ENCODE measurements at regions of chrX and their contacts with region 1.

Region 1: DNA sequence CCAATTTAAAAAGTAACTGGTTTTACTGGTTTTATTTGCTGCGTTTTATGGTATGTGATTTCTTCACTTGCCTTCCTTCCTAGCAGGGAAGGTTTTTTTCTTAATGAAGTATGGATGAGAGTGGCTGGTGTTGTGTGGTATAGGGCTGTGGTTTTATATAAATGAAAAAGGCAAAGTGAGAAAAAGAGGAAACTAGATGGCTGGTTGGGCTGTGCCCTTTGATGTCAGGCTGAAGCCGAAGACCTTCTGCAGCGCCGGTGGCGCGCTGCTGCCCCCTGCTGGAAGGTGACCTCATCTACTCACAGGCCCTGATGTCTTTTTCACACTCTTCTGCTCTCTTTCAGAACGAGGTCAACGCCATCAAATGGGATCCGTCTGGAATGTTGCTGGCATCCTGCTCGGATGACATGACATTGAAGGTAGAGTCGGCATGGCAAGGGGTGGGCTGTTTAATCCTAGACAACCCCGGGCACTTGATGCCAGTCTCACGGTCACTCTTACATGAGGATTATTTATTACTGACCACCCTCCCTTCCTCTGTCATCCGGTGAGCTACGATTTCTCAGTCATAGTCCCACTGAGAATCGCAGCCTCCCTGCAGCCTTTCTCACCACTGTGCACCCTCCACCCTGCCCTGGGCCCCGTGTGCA is 56.6 kb downstream of the GPR143 start:
- DNase-seq: peak; percentile 16 to 82
- H3K4me3 ChIP-seq: no peak overlapping the region
- H3K27ac ChIP-seq: no peak overlapping the region
- H3K4me1 ChIP-seq: no peaks in the 10 kb centered on the region
- H3K27me3 ChIP-seq: no peaks in the 10 kb centered on the region
- CTCF ChIP-seq: peak; percentile 77 to 89 (median 83)

Region 2: GRCh38 chrX:8743126-8743732 is 965.8 kb before region 1 on chrX:
- intact Hi-C with region 1: loop called (anchors 10 kb)
- DNase-seq: no peak
- H3K4me3 ChIP-seq: no peak overlapping the region
- H3K27ac ChIP-seq: no peak overlapping the region
- H3K4me1 ChIP-seq: no peaks in the 10 kb centered on the region
- H3K27me3 ChIP-seq: peaks cover 4% of the 10 kb centered on the region
- CTCF ChIP-seq: peak; percentile 30 to 65 (median 64)

Region 3: GRCh38 chrX:8820910-8821527 is 888.0 kb before region 1 on chrX:
- intact Hi-C with region 1: loop called (anchors 2 kb)
- DNase-seq: no peak
- H3K4me3 ChIP-seq: no peak overlapping the region
- H3K27ac ChIP-seq: no peak overlapping the region
- H3K4me1 ChIP-seq: no peaks in the 10 kb centered on the region
- H3K27me3 ChIP-seq: no peaks in the 10 kb centered on the region
- CTCF ChIP-seq: no peak

Region 4: GRCh38 chrX:8868906-8869305 is 840.1 kb before region 1 on chrX:
- intact Hi-C with region 1: loop called (anchors 1 kb)
- DNase-seq: no peak
- H3K4me3 ChIP-seq: no peak overlapping the region
- H3K27ac ChIP-seq: no peak overlapping the region
- H3K4me1 ChIP-seq: peaks cover 0 to 14% of the 10 kb centered on the region in 2 donors
- H3K27me3 ChIP-seq: no peaks in the 10 kb centered on the region
- CTCF ChIP-seq: peak in 2 of 3 experiments; percentile 29 to 45

Region 5: GRCh38 chrX:8971116-8971515 is 737.9 kb before region 1 on chrX:
- intact Hi-C with region 1: loop called (anchors 2 kb)
- DNase-seq: no peak
- H3K4me3 ChIP-seq: no peak overlapping the region
- H3K27ac ChIP-seq: no peak overlapping the region
- H3K4me1 ChIP-seq: no peaks in the 10 kb centered on the region
- H3K27me3 ChIP-seq: no peaks in the 10 kb centered on the region
- CTCF ChIP-seq: peak in 1 of 3 experiments; percentile 39

Region 6: GRCh38 chrX:9341291-9342201 is 367.5 kb before region 1 on chrX:
- intact Hi-C with region 1: loop called (anchors 5 kb)
- DNase-seq: peak in 1 of 2 donors; percentile 85
- H3K4me3 ChIP-seq: peak overlapping the region; percentile 55 to 68
- H3K27ac ChIP-seq: peak overlapping the region; percentile 88 to 90
- H3K4me1 ChIP-seq: peaks cover 10 to 33% of the 10 kb centered on the region in 2 donors
- H3K27me3 ChIP-seq: no peaks in the 10 kb centered on the region
- CTCF ChIP-seq: no peak

Region 7: GRCh38 chrX:9737363-9737762 is 28.3 kb after region 1 on chrX:
- intact Hi-C with region 1: no loop called
- DNase-seq: no peak
- H3K4me3 ChIP-seq: no peak overlapping the region
- H3K27ac ChIP-seq: no peak overlapping the region
- H3K4me1 ChIP-seq: no peaks in the 10 kb centered on the region
- H3K27me3 ChIP-seq: no peaks in the 10 kb centered on the region
- CTCF ChIP-seq: no peak

Measured in ascending aorta (tissue), 2 donors.